ENCODE measurements at regions of chr1 and their contacts with region 1.

Region 1: DNA sequence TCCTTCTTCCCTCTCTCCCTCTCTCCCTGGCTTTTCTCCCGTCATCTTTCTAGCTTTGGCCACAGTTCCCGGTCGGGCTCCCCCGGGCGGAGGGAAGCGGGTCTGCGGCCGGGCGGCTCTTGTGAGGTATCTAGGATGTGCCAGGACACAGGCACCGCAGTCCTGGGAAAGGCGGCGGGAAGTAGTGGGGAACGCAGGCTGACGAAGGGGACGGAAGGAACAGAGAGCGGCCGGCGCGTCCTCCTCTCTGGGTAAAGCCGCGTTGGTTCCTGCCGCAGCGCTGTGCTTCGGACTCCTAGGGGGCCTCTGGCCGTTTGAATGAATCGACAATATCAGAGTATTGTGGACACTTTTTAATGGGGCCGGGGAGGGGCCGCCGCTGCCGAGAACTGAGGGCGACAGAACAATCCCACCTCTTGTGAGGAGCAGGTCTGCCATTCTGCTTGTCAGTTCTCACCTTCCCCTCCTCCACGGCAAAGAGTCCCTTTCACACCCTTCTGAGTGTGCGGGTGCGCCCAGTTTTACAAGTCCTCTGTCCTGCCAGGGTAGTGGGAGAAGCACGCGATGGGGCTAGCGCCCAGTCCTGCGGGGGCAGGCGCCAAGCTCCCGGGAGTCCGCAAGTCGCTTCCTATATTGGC is 1.2 kb upstream of the LHX9 start:
- DNase-seq: peak; percentile 56
- H3K4me3 ChIP-seq: peak overlapping the region; percentile 18 to 44 (median 38)
- H3K27ac ChIP-seq: no peak overlapping the region
- H3K4me1 ChIP-seq: peaks cover 36% of the 10 kb centered on the region
- H3K27me3 ChIP-seq: peaks cover 85% of the 10 kb centered on the region
- CTCF ChIP-seq: peak; percentile 25 to 65

Region 2: DNA sequence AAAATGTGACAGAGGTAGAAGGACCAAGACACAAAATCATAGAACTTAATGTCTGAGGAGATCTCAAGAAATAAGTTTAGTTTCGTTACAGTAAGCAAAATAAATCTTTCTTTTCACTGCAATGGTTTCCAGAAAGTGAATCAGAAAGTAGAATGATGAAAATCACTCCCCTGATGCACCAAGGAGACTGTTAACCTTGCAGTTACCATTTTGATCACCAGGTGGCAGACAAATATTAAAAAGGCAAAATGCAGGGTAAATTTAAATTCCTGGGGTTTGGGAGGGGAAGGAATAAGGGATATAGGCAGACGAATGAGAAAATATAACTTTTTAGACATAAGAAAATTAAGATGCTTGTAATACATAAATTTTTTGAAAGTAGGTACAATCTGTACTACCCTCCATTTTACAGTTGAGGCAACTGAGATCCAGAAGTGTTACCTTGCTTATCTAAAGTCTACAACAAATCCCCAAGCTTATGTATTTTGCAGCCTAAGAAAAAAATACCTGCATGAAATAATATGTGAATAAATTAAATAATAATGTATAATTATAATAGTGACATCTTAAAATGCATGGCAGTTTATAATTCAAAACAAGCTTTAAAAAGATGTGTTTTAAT is 394.8 kb before region 1 on chr1:
- CTCF ChIA-PET with region 1: interaction called, 4 read pairs
- dilution Hi-C with region 1: no loop called
- in situ Hi-C with region 1: loop called (anchors 10 kb)
- intact Hi-C with region 1: loop called (anchors 5 kb)
- DNase-seq: peak; percentile 17
- H3K4me3 ChIP-seq: no peak overlapping the region
- H3K27ac ChIP-seq: no peak overlapping the region
- H3K4me1 ChIP-seq: no peaks in the 10 kb centered on the region
- H3K27me3 ChIP-seq: no peaks in the 10 kb centered on the region
- CTCF ChIP-seq: peak; percentile 67 to 69

Region 3: GRCh38 chr1:197526736-197527371 is 389.1 kb before region 1 on chr1:
- CTCF ChIA-PET with region 1: interaction called, 4 read pairs
- dilution Hi-C with region 1: no loop called
- in situ Hi-C with region 1: loop called (anchors 10 kb)
- intact Hi-C with region 1: loop called (anchors 5 kb)
- DNase-seq: peak; percentile 2
- H3K4me3 ChIP-seq: no peak overlapping the region
- H3K27ac ChIP-seq: no peak overlapping the region
- H3K4me1 ChIP-seq: no peaks in the 10 kb centered on the region
- H3K27me3 ChIP-seq: no peaks in the 10 kb centered on the region
- CTCF ChIP-seq: peak; percentile 44 to 54

Region 4: DNA sequence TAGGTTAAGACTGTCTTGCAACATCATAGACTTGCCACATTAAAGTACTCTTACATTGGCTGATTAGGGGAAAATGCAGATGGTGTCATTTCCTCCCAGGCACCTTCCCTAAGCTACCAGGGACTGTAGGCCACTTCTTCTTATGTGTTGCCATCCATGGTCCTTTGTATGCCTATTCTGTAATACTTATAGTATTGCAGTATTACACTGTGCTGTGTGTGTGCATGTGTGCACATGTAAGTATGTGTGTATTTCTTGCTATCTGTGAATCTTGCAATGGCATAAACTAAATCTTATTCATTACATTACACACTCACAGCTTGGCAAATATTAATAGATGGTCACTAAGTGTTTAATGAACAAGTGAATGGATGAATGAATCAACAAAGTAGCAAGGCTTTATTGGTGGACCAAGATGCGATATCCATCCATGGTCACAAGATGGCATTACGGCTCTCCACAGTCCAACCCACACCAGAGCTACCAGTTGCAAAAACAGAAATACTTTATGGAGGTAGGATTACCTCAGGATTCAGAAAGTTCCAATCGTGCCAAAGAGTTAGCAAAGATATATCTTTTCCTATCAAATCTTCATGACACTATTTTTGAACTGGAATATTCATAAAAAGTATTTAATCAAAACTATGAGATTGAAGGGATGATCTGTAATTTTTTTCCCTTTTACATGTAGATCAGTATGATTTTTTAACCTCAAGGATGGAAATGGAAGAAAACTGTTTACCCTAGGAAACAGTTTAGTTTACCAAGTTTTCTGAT is 300.9 kb before region 1 on chr1:
- CTCF ChIA-PET with region 1: interaction called, 6 read pairs
- dilution Hi-C with region 1: no loop called
- in situ Hi-C with region 1: no loop called
- intact Hi-C with region 1: loop called (anchors 2 kb)
- DNase-seq: peak; percentile 19
- H3K4me3 ChIP-seq: no peak overlapping the region
- H3K27ac ChIP-seq: no peak overlapping the region
- H3K4me1 ChIP-seq: no peaks in the 10 kb centered on the region
- H3K27me3 ChIP-seq: no peaks in the 10 kb centered on the region
- CTCF ChIP-seq: peak; percentile 50 to 70

Measured in mammary epithelial cell (primary cell).